ENCODE measurements at regions of chr9 and their contacts with region 1.

Region 1: GRCh38 chr9:19048966-19049916 is at the start of gene RRAGA:
- DNase-seq: peak; percentile 96
- H3K4me3 Mint-ChIP-seq: peak within 1 kb of the TSS; percentile 87
- H3K27ac Mint-ChIP-seq: peak within 1 kb of the TSS; percentile 98
- H3K4me1 Mint-ChIP-seq: peaks cover 35% of the 10 kb centered on the region
- H3K27me3 Mint-ChIP-seq: peaks cover 4% of the 10 kb centered on the region

Region 2: GRCh38 chr9:18791074-18791473 is 258.2 kb before region 1 on chr9:
- CTCF ChIA-PET with region 1: no interaction called
- DNase-seq: no peak
- H3K4me3 Mint-ChIP-seq: no peak overlapping the region
- H3K27ac Mint-ChIP-seq: no peak overlapping the region
- H3K4me1 Mint-ChIP-seq: no peaks in the 10 kb centered on the region
- H3K27me3 Mint-ChIP-seq: peaks cover 11% of the 10 kb centered on the region

Region 3: DNA sequence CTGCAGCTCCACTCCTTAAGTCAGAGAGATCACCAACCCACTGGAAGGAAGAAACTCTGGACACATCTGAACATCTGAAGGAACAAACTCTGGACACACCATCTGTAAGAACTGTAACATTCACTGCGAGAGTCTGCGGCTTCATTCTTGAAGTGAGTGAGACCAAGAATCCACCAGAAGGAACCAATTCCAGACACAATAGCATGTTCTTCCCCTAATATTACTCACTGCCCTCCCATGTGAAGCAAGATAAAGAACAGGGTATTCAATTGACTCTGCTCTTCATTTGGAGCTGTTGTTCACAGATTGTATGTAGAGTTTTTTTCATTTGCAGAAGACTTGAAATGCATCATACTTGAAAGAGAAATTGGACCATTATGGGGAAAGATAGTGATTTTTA is 27.0 kb before region 1 on chr9:
- CTCF ChIA-PET with region 1: no interaction called
- DNase-seq: no peak
- H3K4me3 Mint-ChIP-seq: no peak overlapping the region
- H3K27ac Mint-ChIP-seq: no peak overlapping the region
- H3K4me1 Mint-ChIP-seq: peaks cover 2% of the 10 kb centered on the region
- H3K27me3 Mint-ChIP-seq: peaks cover 17% of the 10 kb centered on the region

Region 4: DNA sequence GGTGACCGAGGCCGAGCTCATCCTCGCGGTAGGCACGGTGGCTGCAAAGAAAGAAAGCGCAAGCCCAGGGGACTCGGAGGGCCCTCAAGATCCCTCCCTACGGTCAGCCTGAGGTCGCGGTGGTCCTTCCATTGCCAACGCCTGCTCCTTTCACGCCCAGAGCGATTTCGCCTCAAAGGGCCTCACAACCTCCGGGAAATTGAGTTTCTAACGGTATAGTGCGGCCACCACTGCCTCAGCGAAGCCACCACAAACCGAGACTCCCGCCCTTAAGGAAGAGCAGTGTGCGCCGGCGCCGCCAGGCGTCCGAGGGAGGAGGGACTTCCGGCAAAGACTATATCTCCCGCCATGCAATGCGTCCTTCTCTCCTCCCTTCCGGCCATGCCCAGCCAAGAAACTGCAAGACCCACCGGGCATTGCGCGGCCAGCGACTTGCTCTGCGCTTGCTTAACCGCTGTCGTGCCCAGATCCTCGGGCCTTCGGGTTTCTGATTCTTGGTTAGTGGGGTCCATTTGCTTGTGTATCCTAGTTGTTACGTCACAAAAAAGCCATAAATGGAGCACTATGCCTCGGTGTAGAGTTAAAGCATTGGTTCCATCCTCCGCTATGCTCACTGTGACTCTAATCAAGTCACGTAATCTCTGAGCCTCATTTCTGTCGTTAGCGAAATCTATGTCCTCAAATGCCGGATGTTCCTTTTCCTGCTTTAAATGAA is 53.5 kb after region 1 on chr9 and contains the start of gene HAUS6:
- CTCF ChIA-PET with region 1: no interaction called
- DNase-seq: peak; percentile 98
- H3K4me3 Mint-ChIP-seq: peak within 1 kb of the TSS; percentile 94
- H3K27ac Mint-ChIP-seq: peak within 1 kb of the TSS; percentile 93
- H3K4me1 Mint-ChIP-seq: peaks cover 37% of the 10 kb centered on the region
- H3K27me3 Mint-ChIP-seq: no peaks in the 10 kb centered on the region

Region 5: DNA sequence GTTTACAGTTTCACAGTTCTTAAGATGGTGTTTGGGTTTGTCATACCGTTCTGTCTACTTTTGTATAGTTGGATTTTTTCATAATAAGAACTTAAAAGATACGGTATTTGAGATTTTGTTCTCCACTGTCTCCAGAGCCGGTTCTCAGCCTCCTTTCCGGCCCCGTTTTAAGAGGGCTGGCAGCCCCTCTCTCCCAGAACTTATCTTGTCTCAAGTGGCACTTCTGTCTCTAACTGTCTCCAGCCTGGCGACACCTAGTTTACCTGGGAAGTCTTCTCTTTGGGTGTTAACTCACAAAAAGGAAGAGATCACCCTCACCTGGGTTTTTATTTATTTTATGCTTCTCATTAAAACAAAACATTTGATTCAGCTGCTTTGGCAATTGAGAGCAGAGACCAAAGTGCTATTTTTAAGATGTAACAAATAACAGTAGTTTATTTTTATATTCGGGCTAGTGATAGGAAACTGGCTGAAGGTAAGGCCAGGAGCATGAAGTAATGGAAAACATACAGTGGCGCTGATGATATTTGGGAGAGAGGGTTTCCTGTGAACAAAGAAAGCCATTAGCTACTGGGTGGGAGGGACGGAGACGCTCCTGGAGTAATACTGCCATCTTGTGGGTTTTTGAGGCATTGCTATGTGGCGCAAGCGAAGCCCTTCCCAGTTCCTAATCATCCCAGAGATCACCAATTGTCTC is 407.9 kb after region 1 on chr9:
- CTCF ChIA-PET with region 1: interaction called, 19 read pairs
- DNase-seq: peak; percentile 70
- H3K4me3 Mint-ChIP-seq: no peak overlapping the region
- H3K27ac Mint-ChIP-seq: no peak overlapping the region
- H3K4me1 Mint-ChIP-seq: peaks cover 12% of the 10 kb centered on the region
- H3K27me3 Mint-ChIP-seq: peaks cover 7% of the 10 kb centered on the region